Gastrocnemius medialis (tissue), 4 donors: ENCODE measurements at regions of chr7 and their contacts with region 1.

Region 1: DNA sequence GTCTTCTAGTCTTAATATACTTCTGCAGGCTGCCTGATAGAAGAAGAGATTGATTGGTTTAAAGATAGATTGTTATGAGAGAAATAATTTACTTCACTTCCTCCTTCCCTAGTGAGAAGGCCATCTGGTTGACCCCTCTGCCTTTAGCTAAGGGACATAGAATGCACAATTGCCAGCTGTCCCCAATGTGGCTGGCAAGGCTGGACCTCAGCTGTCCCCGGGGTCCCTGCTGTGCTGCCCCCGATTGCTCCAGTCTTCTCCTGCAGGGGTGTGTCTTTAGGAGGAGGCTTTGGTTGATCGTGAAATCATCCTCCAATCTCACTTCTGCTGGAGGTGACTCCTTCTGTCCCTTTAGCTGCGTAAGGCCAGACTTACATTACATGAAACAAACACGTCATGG is 388.5 kb downstream of the DPP6 start:
- DNase-seq: no peak
- ATAC-seq: no peak
- H3K4me3 ChIP-seq: no peak overlapping the region
- H3K27ac ChIP-seq: peak overlapping the region; percentile 74 to 89 (median 78)
- H3K4me1 ChIP-seq: peaks cover 18 to 39% of the 10 kb centered on the region in 2 donors
- H3K27me3 ChIP-seq: no peaks in the 10 kb centered on the region
- CTCF ChIP-seq: no peak
- POLR2A ChIP-seq: peak in 1 of 2 donors; percentile 33

Region 2: GRCh38 chr7:154415709-154416399 is 24.8 kb before region 1 on chr7:
- in situ Hi-C with region 1: no loop called
- intact Hi-C with region 1: loop called (anchors 2 kb)
- DNase-seq: peak; percentile 9 to 55
- ATAC-seq: peak; percentile 88 to 90
- H3K4me3 ChIP-seq: no peak overlapping the region
- H3K27ac ChIP-seq: peak overlapping the region in 3 of 4 donors; percentile 49 to 61 (median 53)
- H3K4me1 ChIP-seq: no peaks in the 10 kb centered on the region
- H3K27me3 ChIP-seq: no peaks in the 10 kb centered on the region
- CTCF ChIP-seq: no peak
- POLR2A ChIP-seq: peak in 1 of 2 donors; percentile 21

Region 3: GRCh38 chr7:154423231-154423630 is 17.4 kb before region 1 on chr7:
- in situ Hi-C with region 1: no loop called
- intact Hi-C with region 1: loop called (anchors 2 kb)
- DNase-seq: peak; percentile 48 to 82
- ATAC-seq: peak; percentile 85 to 95
- H3K4me3 ChIP-seq: no peak overlapping the region
- H3K27ac ChIP-seq: peak overlapping the region; percentile 71 to 77 (median 72)
- H3K4me1 ChIP-seq: peaks cover 5 to 13% of the 10 kb centered on the region in 2 donors
- H3K27me3 ChIP-seq: no peaks in the 10 kb centered on the region
- CTCF ChIP-seq: no peak
- POLR2A ChIP-seq: no peak